Activated T-helper 1 cell treated with anti-CD3 and anti-CD28 coated beads, Interleukin-12 subunit alpha, Interleukin-12 subunit beta, Interleukin-2, Interleukin-4 antibody, amounts not matched to agents 30 ng/mL and 10 ng/mL and 1 ng/mL, durations not matched to agents 14 hours and 24 hours and 36 hours (primary cell): ENCODE measurements at regions of chr1 and their contacts with region 1.

Region 1: GRCh38 chr1:58783993-58784757 is at the start of gene JUN:
- DNase-seq: peak; percentile 98
- H3K4me3 Mint-ChIP-seq: peak within 1 kb of the TSS; percentile 96
- H3K27ac Mint-ChIP-seq: peak within 1 kb of the TSS; percentile 96
- H3K4me1 Mint-ChIP-seq: peaks cover 34% of the 10 kb centered on the region
- H3K27me3 Mint-ChIP-seq: peaks cover 4% of the 10 kb centered on the region
- total RNA-seq, gene JUN: 68.5 and 71.6 TPM in 2 replicates

Region 2: DNA sequence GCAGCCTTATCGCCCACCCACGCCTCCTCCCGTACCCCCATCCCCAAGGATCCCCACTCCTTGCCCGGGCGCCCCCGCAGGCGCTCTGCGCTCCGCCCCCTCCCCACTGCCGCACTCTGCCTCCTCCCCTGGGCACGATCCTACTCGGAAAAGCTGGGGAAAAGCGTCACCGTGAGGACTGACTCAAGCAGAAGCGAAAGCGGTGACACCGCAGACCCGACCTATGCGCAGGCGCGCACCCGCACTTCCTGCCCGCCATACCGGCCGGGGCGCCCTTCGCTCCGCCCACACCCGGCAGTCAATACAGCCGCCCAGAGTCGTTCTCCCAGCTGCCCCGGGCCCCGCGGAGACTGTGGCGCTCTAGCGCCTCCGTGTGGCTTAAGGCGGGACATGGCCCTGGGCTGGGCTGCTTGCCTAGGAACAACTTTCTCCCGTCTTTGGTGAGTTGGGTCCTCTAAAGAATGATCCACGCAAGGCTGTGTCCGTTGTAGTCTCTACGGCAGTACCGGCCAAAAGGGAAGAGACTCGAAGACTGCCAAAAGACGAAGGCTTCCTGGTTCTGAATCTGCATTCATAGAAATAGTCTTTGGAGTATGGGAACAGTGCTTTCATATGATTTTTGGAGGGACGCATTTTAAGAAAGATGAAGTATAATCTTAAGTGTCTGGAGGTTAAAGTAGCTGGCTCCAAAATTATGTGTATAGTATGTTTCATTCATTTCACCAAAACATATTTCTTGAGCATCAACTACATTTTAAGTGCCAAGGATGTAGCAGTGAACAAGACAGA is 237.5 kb before region 1 on chr1 and contains the start of gene OMA1:
- intact Hi-C with region 1: loop called (anchors 1 kb)
- DNase-seq: peak; percentile 97
- H3K4me3 Mint-ChIP-seq: peak within 1 kb of the TSS; percentile 91
- H3K27ac Mint-ChIP-seq: peak within 1 kb of the TSS; percentile 95
- H3K4me1 Mint-ChIP-seq: peaks cover 19% of the 10 kb centered on the region
- H3K27me3 Mint-ChIP-seq: peaks cover 15% of the 10 kb centered on the region
- total RNA-seq, gene OMA1: 12.9 and 13.0 TPM in 2 replicates

Region 3: GRCh38 chr1:58802638-58803399 is 18.6 kb after region 1 on chr1:
- intact Hi-C with region 1: no loop called
- DNase-seq: no peak
- H3K4me3 Mint-ChIP-seq: no peak overlapping the region
- H3K27ac Mint-ChIP-seq: no peak overlapping the region
- H3K4me1 Mint-ChIP-seq: peaks cover 33% of the 10 kb centered on the region
- H3K27me3 Mint-ChIP-seq: no peaks in the 10 kb centered on the region

Region 4: DNA sequence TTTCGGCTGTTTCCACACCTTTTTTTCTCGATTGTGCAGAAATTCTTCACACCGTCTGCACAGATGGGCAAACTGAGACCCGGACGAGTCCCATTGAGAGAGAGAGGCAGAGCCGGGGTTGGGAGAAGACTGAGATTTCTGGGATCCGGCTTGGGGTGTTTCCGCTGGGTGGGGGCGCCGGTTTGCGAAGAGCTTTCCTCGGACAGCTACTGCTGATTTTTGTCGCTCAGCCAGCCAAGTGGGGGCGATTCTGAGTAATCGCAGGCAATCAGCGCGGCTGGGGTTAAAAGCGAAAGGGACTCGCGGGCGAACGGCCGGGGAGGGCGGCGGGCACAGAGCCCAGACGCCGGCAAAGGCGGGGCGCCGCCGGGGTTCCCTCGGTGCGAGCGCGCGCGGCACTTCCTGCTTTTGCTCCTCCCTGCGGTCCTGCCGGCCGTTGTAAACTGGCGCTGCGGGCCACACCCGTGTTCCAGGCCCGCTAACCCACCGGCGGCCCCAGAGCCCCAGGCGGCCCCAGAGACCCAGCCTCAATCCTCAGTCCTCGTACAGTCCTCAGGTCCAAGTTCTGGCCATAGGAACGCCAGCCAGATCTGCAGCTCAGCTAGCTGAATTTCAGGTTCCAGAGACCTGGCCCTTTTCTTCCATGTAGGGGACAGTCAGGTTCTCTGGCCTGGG is 32.0 kb after region 1 on chr1:
- intact Hi-C with region 1: loop called (anchors 1 kb)
- DNase-seq: peak; percentile 83
- H3K4me3 Mint-ChIP-seq: peak overlapping the region; percentile 83
- H3K27ac Mint-ChIP-seq: peak overlapping the region; percentile 86
- H3K4me1 Mint-ChIP-seq: peaks cover 56% of the 10 kb centered on the region
- H3K27me3 Mint-ChIP-seq: peaks cover 2% of the 10 kb centered on the region

Region 5: GRCh38 chr1:58827298-58827697 is 43.1 kb after region 1 on chr1:
- intact Hi-C with region 1: no loop called
- DNase-seq: no peak
- H3K4me3 Mint-ChIP-seq: no peak overlapping the region
- H3K27ac Mint-ChIP-seq: no peak overlapping the region
- H3K4me1 Mint-ChIP-seq: peaks cover 6% of the 10 kb centered on the region
- H3K27me3 Mint-ChIP-seq: peaks cover 5% of the 10 kb centered on the region

Region 6: GRCh38 chr1:58968360-58968952 is 184.3 kb after region 1 on chr1:
- intact Hi-C with region 1: loop called (anchors 1 kb)
- DNase-seq: peak; percentile 42
- H3K4me3 Mint-ChIP-seq: peak overlapping the region; percentile 77
- H3K27ac Mint-ChIP-seq: peak overlapping the region; percentile 98
- H3K4me1 Mint-ChIP-seq: peaks cover 76% of the 10 kb centered on the region
- H3K27me3 Mint-ChIP-seq: no peaks in the 10 kb centered on the region

Region 7: GRCh38 chr1:59046730-59047157 is 262.6 kb after region 1 on chr1:
- intact Hi-C with region 1: loop called (anchors 1 kb)
- DNase-seq: peak; percentile 62
- H3K4me3 Mint-ChIP-seq: peak overlapping the region; percentile 67
- H3K27ac Mint-ChIP-seq: peak overlapping the region; percentile 71
- H3K4me1 Mint-ChIP-seq: peaks cover 77% of the 10 kb centered on the region
- H3K27me3 Mint-ChIP-seq: no peaks in the 10 kb centered on the region

Region 8: GRCh38 chr1:59432531-59433439 is 648.6 kb after region 1 on chr1:
- intact Hi-C with region 1: loop called (anchors 1 kb)
- DNase-seq: no peak
- H3K4me3 Mint-ChIP-seq: no peak overlapping the region
- H3K27ac Mint-ChIP-seq: peak overlapping the region; percentile 61
- H3K4me1 Mint-ChIP-seq: peaks cover 49% of the 10 kb centered on the region
- H3K27me3 Mint-ChIP-seq: no peaks in the 10 kb centered on the region